ENCODE measurements at regions of chr4 and their contacts with region 1.

Region 1: DNA sequence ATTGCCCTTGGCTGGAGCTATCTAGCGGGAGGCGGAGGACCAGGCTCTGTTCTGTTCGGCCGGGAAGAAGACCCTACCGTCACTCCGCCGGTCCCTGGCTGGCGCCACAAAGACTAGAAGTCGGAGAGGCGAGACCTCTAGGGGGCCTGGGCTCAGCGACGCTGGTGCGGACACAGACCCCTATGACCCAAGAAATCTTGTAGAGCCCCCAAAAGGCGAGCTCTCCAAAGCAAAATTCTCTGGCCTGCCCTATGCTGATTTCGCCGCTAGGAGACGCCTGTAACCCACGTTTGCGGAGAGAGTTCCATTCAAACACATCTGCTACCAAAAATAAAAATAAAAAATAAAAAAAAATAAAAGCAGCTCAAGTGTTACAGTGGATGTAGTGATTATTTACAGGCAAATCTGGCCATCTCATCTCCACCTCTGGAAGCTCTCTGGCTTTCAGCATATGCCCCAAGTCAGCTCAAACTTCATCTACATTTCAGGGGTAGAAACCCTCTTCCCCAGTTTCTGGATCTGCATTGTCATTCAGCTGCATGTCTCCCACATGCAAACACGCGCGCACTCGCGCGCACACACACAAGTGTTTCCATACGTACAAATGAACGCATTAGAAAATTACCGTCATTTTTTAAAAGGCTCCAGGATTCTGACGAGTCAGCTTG is 2.4 kb upstream of the PCDH10 start:
- DNase-seq: peak; percentile 41
- CTCF ChIP-seq: peak; percentile 78

Region 2: GRCh38 chr4:133157460-133158160 is 10.9 kb after region 1 on chr4:
- CTCF ChIA-PET with region 1: interaction called, 14 read pairs
- POLR2A ChIA-PET with region 1: no interaction called
- DNase-seq: no peak
- CTCF ChIP-seq: no peak

Measured in GM10248 (cell line).